ENCODE measurements at regions of chr1 and their contacts with region 1.

Region 1: GRCh38 chr1:84724128-84724860 is 34.0 kb upstream of the SSX2IP start:
- DNase-seq: peak; percentile 85
- ATAC-seq: peak; percentile 96
- H3K4me3 Mint-ChIP-seq: no peak overlapping the region
- H3K27ac Mint-ChIP-seq: no peak overlapping the region
- H3K4me1 Mint-ChIP-seq: peaks cover 20% of the 10 kb centered on the region
- H3K27me3 Mint-ChIP-seq: no peaks in the 10 kb centered on the region
- CTCF ChIP-seq: peak; percentile 96

Region 2: DNA sequence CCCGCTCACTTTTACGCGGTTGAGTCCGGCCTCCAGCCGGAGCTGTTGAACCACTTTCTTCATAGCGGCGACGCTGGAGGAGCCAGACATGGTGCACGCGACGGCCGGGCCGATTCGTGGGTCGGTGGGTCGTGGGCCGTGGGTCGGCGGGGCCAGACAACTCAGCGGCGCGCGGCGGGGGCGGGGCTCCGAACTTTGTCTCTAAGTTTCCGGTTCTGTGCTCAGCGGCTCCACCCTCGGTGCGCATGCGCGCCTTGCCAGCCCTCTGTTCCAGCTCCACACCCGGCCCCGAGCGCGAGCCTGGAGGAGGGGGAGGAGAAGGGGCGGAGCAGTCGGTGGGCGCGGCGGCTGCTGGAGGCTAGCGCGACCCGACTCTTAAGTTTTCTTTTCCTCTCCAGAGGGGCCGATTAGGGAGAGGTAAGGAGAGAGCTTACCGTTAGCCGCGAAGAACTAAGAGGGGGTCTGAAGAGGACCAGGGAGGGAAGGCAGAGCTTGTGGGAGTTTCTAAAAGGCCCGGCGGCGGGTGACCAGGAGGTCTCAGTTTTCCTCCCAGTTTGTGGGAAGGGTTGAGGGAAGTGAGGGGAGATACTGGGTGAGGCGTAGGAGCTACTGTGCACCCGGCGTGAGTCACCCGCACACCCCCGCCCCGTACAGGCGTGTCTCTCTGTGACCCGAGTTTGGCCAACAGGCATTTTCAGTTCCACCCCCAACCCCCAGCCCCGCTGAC is 218.1 kb before region 1 on chr1 and contains the starts of genes GNG5 and SPATA1:
- CTCF ChIA-PET with region 1: interaction called, 10 read pairs
- POLR2A ChIA-PET with region 1: no interaction called
- DNase-seq: peak; percentile 98
- ATAC-seq: peak; percentile 93
- H3K4me3 Mint-ChIP-seq: peak within 1 kb of the TSS; percentile 100
- H3K27ac Mint-ChIP-seq: peak within 1 kb of the TSS; percentile 99
- H3K4me1 Mint-ChIP-seq: peaks cover 36% of the 10 kb centered on the region
- H3K27me3 Mint-ChIP-seq: no peaks in the 10 kb centered on the region; the same call in 1 of the 2 replicates
- CTCF ChIP-seq: no peak
- total RNA-seq, gene GNG5: 108 to 122 TPM (median 111 TPM) in 3 replicates
- total RNA-seq, gene SPATA1: 0.85 to 0.92 TPM in 2 of 3 replicates, not detected in the other

Region 3: GRCh38 chr1:84653130-84653677 is 71.1 kb before region 1 on chr1:
- CTCF ChIA-PET with region 1: interaction called, 12 read pairs
- POLR2A ChIA-PET with region 1: no interaction called
- DNase-seq: no peak
- ATAC-seq: no peak
- H3K4me3 Mint-ChIP-seq: no peak overlapping the region
- H3K27ac Mint-ChIP-seq: no peak overlapping the region
- H3K4me1 Mint-ChIP-seq: no peaks in the 10 kb centered on the region
- H3K27me3 Mint-ChIP-seq: no peaks in the 10 kb centered on the region
- CTCF ChIP-seq: no peak

Region 4: DNA sequence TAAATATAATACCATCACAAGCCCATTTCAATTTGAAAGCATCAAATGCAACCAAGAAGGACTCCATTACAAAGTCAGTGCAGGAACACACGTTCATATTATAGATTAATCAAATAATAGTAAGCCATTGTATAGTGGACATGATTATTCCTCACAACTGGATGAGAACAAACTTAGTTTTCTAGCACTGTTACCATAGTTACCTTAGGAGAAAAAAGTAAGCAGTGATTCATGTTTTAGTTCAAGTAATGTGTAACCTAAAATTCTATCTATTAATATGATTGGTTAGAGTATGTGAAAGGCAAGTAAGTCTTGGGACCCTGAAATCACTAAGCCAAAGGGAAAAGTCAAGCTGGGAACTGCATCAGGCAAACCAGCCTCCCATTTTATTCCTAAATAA is 49.2 kb before region 1 on chr1:
- CTCF ChIA-PET with region 1: interaction called, 22 read pairs
- POLR2A ChIA-PET with region 1: interaction called, 3 read pairs
- DNase-seq: no peak
- ATAC-seq: no peak
- H3K4me3 Mint-ChIP-seq: no peak overlapping the region
- H3K27ac Mint-ChIP-seq: peak overlapping the region; percentile 69
- H3K4me1 Mint-ChIP-seq: peaks cover 71% of the 10 kb centered on the region
- H3K27me3 Mint-ChIP-seq: no peaks in the 10 kb centered on the region
- CTCF ChIP-seq: no peak

Region 5: DNA sequence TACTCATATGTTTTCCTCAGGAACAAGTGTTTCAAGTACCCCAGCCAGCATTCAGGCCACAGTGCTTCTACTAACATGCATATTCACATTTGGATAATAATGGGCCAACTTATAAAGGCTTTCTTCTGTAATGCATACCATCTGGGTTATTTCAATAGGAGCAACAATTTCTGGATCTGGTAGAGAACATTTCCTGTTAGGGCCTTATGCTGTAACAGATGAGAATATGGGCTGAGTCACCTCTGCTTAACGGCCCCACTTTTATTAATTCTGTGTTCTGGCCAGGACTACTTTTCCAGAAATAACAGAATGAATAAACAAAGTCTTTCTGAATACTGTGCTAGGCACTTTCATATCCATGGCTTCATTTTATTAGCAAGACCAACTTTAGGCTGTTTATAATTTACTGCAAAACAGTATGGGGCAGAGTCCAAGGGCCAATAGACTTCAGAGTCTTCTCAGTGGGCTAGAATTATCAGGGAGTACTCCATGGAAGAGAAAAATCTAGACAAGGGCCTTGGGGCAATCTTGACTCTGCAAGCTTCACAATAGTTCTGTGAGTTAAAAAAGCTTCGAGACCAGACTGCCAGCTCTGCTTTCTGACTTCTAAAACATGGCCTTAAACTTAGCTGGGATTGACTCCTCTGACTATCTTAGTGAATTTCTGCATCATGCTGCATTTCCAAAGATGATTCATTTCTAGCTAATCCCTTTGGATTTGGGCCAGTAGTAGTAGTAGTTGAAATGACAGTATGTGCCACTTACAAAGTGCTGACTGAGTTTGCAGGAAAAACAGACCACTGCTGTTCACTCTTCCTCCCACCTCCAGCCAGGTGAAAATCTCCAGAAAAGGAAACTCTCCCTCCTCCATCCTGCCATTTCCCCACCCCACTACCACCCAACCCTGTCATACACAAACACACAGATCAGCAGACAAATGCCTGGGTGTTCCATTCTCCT is 25.9 kb before region 1 on chr1:
- CTCF ChIA-PET with region 1: interaction called, 50 read pairs
- POLR2A ChIA-PET with region 1: no interaction called
- DNase-seq: no peak
- ATAC-seq: peak; percentile 29; the same call in 1 of the 2 replicates
- H3K4me3 Mint-ChIP-seq: no peak overlapping the region
- H3K27ac Mint-ChIP-seq: no peak overlapping the region
- H3K4me1 Mint-ChIP-seq: peaks cover 49% of the 10 kb centered on the region
- H3K27me3 Mint-ChIP-seq: no peaks in the 10 kb centered on the region
- CTCF ChIP-seq: no peak

Region 6: GRCh38 chr1:84712276-84712874 is 11.9 kb before region 1 on chr1:
- CTCF ChIA-PET with region 1: interaction called, 44 read pairs
- POLR2A ChIA-PET with region 1: interaction called, 3 read pairs
- DNase-seq: no peak
- ATAC-seq: no peak
- H3K4me3 Mint-ChIP-seq: no peak overlapping the region
- H3K27ac Mint-ChIP-seq: no peak overlapping the region
- H3K4me1 Mint-ChIP-seq: peaks cover 8% of the 10 kb centered on the region
- H3K27me3 Mint-ChIP-seq: no peaks in the 10 kb centered on the region; the same call in 1 of the 2 replicates
- CTCF ChIP-seq: no peak

Region 7: GRCh38 chr1:84753516-84754385 is 29.5 kb after region 1 on chr1:
- CTCF ChIA-PET with region 1: interaction called, 15 read pairs
- POLR2A ChIA-PET with region 1: no interaction called
- DNase-seq: peak; percentile 78
- ATAC-seq: peak; percentile 89
- H3K4me3 Mint-ChIP-seq: no peak overlapping the region
- H3K27ac Mint-ChIP-seq: no peak overlapping the region
- H3K4me1 Mint-ChIP-seq: peaks cover 59% of the 10 kb centered on the region
- H3K27me3 Mint-ChIP-seq: no peaks in the 10 kb centered on the region
- CTCF ChIP-seq: peak; percentile 84

Measured in WTC11 (cell line).